T-cell (primary cell): ENCODE measurements at regions of chr3 and their contacts with region 1.

Region 1: GRCh38 chr3:44529927-44530326 is 25.1 kb upstream of the ZKSCAN7 start:
- DNase-seq: peak in 1 of 35 experiments; percentile 27
- ATAC-seq: no peak
- H3K4me3 ChIP-seq: no peak overlapping the region
- H3K4me3 Mint-ChIP-seq: no peak overlapping the region
- H3K27ac ChIP-seq: no peak overlapping the region
- H3K27ac Mint-ChIP-seq: no peak overlapping the region
- H3K4me1 ChIP-seq: no peaks in the 10 kb centered on the region
- H3K4me1 Mint-ChIP-seq: peaks cover 0 to 2% (median 0%) of the 10 kb centered on the region in 3 donors
- H3K27me3 ChIP-seq: peaks cover 0 to 26% of the 10 kb centered on the region in 2 experiments
- H3K27me3 Mint-ChIP-seq: peaks cover 10 to 29% of the 10 kb centered on the region in 2 donors

Region 2: DNA sequence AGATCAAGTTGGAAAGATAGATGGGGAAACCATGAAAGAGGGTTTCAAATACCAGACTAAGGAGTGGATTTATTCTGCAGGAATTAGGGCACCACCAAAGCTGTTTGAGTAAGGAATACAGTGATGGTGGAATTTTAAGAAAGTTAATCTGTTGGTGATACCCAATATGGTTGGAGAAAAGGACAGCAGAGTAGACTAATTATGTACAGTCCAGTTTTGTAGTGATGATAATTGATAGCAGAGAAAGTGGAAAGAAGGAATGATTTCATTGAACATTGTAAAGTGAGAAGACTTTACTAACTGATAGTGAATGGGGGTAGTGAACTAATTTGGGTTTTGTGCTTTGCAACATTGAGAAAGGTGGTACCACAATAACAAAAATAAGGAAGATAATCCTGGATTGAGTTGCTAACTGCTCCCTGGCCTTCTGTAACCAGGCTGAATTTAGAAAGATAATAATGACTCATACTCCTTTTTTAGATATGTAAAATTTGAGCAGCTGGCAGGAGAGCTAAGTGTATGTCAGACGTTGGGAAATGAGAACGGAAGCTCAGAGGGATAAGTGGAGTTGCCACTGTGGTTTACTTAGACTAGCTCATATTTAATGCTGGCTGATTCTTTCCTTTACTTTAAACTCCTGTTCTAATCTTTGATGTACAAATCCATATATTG is 174.4 kb before region 1 on chr3:
- CTCF ChIA-PET with region 1: no interaction called
- POLR2A ChIA-PET with region 1: no interaction called
- DNase-seq: no peak
- ATAC-seq: no peak
- H3K4me3 ChIP-seq: no peak overlapping the region
- H3K4me3 Mint-ChIP-seq: no peak overlapping the region
- H3K27ac ChIP-seq: no peak overlapping the region
- H3K27ac Mint-ChIP-seq: no peak overlapping the region
- H3K4me1 ChIP-seq: no peaks in the 10 kb centered on the region
- H3K4me1 Mint-ChIP-seq: peaks cover 6 to 17% (median 9%) of the 10 kb centered on the region in 3 donors
- H3K27me3 ChIP-seq: no peaks in the 10 kb centered on the region
- H3K27me3 Mint-ChIP-seq: no peaks in the 10 kb centered on the region

Region 3: DNA sequence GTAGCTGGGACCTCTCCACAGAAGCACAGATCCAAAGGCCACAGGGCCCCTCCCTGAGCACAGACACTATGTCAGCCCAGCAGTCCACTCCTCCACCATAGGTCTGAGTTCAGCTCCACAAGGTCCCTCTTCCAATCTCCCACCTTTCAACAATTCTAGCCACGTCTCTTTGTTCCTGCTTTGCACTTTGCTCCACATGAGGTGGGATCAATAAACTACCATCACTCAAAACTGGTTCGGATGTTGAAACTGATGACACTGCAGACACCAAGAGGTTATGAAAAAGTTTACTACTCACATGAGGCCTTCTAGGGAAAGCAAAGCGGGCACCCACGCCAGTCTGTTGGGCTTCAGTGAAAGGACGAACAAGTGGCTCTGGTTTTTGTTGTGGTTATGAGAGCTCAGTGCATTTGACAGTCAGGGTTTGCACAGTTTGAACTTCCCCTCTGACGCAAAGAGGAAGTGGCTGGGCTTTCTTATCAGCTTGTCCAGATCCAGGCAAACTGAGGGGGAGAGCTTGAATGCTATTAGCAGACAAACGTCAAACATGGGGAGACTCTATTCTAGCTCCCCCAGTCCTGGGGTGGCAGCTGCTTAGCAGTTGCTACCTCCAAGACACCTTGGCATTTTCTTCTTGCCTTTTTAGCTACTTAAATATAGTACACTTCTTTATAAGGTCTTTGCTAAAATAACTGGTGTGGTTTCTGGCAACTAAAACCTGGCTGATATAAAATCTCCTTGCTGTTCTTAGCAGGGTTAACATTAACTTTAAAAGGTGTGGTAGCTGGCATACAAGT is 90.2 kb before region 1 on chr3:
- CTCF ChIA-PET with region 1: no interaction called
- POLR2A ChIA-PET with region 1: no interaction called
- DNase-seq: peak; percentile 6 to 85 (median 64)
- ATAC-seq: peak; percentile 82 to 89 (median 88)
- H3K4me3 ChIP-seq: peak overlapping the region; percentile 14 to 40
- H3K4me3 Mint-ChIP-seq: peak overlapping the region; percentile 54 to 68 (median 60)
- H3K27ac ChIP-seq: peak overlapping the region; percentile 88
- H3K27ac Mint-ChIP-seq: peak overlapping the region; percentile 92 to 95
- H3K4me1 ChIP-seq: peaks cover 12 to 24% of the 10 kb centered on the region in 2 experiments
- H3K4me1 Mint-ChIP-seq: peaks cover 24 to 45% (median 42%) of the 10 kb centered on the region in 3 donors
- H3K27me3 ChIP-seq: no peaks in the 10 kb centered on the region
- H3K27me3 Mint-ChIP-seq: no peaks in the 10 kb centered on the region

Region 4: GRCh38 chr3:44511238-44511567 is 18.7 kb before region 1 on chr3:
- CTCF ChIA-PET with region 1: interaction called, 4 to 12 read pairs
- POLR2A ChIA-PET with region 1: no interaction called
- DNase-seq: peak in 1 of 35 experiments; percentile 15
- ATAC-seq: peak in 1 of 4 experiments; percentile 1
- H3K4me3 ChIP-seq: peak overlapping the region; percentile 68 to 94
- H3K4me3 Mint-ChIP-seq: peak overlapping the region; percentile 93 to 94 (median 94)
- H3K27ac ChIP-seq: peak overlapping the region; percentile 83
- H3K27ac Mint-ChIP-seq: peak overlapping the region; percentile 94
- H3K4me1 ChIP-seq: peaks cover 7 to 23% of the 10 kb centered on the region in 2 experiments
- H3K4me1 Mint-ChIP-seq: peaks cover 39 to 47% (median 40%) of the 10 kb centered on the region in 3 donors
- H3K27me3 ChIP-seq: no peaks in the 10 kb centered on the region
- H3K27me3 Mint-ChIP-seq: no peaks in the 10 kb centered on the region

Region 5: GRCh38 chr3:44913868-44914468 is 384.0 kb after region 1 on chr3:
- CTCF ChIA-PET with region 1: interaction called, 10 to 12 read pairs
- POLR2A ChIA-PET with region 1: no interaction called
- DNase-seq: peak; percentile 14 to 80 (median 53)
- ATAC-seq: peak; percentile 68 to 79 (median 72)
- H3K4me3 ChIP-seq: no peak overlapping the region
- H3K4me3 Mint-ChIP-seq: no peak overlapping the region
- H3K27ac ChIP-seq: no peak overlapping the region
- H3K27ac Mint-ChIP-seq: no peak overlapping the region
- H3K4me1 ChIP-seq: no peaks in the 10 kb centered on the region
- H3K4me1 Mint-ChIP-seq: no peaks in the 10 kb centered on the region
- H3K27me3 ChIP-seq: peaks cover under 1 to 3% of the 10 kb centered on the region in 2 experiments
- H3K27me3 Mint-ChIP-seq: peaks cover 17 to 20% of the 10 kb centered on the region in 2 donors